ENCODE measurements at regions of chr2 and their contacts with region 1.

Region 1: DNA sequence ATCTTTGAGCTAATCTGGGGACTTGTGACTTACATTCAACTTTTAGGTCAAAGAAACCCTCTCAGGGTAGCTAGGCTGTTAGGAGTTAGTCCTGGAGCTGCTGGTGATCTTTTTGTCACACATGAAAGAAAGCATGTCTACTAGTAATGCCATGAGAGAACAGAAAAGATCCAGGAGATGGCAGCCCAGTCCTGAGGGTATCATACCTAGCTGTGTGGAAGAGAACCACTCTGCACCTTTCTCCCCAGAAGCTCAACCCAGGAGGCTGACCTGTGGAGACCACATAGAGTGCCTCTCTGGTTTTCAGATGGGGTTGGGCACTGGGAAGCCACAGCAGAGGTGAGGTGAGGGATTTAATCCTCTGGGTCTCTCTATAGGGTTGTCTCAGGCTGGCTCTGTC is 460.2 kb upstream of the UBE2E3 start:
- DNase-seq: peak; percentile 18
- ATAC-seq: no peak
- H3K4me3 ChIP-seq: no peak overlapping the region
- H3K27ac ChIP-seq: no peak overlapping the region
- H3K4me1 ChIP-seq: peaks cover 8% of the 10 kb centered on the region
- H3K27me3 ChIP-seq: no peaks in the 10 kb centered on the region
- CTCF ChIP-seq: 0 out of 2 replicates have a peak, but pooled peaks have one; percentile 16
- POLR2A ChIP-seq: no peak
- RAD21 ChIP-seq: peak; percentile 37

Region 2: GRCh38 chr2:179764710-179765109 is 755.5 kb before region 1 on chr2:
- CTCF ChIA-PET with region 1: no interaction called
- POLR2A ChIA-PET with region 1: no interaction called
- dilution Hi-C with region 1: no loop called
- in situ Hi-C with region 1: no loop called
- intact Hi-C with region 1: no loop called
- DNase-seq: no peak
- ATAC-seq: no peak
- H3K4me3 ChIP-seq: no peak overlapping the region
- H3K27ac ChIP-seq: no peak overlapping the region
- H3K4me1 ChIP-seq: no peaks in the 10 kb centered on the region
- H3K27me3 ChIP-seq: no peaks in the 10 kb centered on the region; the same call in 1 of the 2 replicates
- CTCF ChIP-seq: no peak
- POLR2A ChIP-seq: no peak
- RAD21 ChIP-seq: no peak

Region 3: DNA sequence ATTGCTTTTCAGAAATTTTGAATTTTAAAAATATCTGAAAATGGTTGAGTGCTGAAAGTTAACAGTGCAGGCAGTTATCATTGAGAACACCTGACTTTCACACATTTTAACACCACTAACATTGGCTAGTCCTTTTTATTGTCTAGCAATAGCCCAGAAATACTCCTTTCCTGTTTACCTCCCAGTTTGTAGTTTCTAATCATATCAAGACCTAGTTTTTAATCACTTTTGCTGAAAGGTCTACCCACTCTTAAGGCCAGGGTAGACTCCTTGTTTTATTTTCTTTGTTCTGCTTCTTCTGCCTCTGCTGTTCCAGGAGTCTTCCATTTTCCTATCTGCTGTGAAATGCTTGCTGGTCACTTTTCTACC is 532.3 kb after region 1 on chr2:
- CTCF ChIA-PET with region 1: no interaction called
- POLR2A ChIA-PET with region 1: no interaction called
- dilution Hi-C with region 1: no loop called
- in situ Hi-C with region 1: no loop called
- intact Hi-C with region 1: loop called (anchors 5 kb)
- DNase-seq: no peak
- ATAC-seq: no peak
- H3K4me3 ChIP-seq: no peak overlapping the region
- H3K27ac ChIP-seq: no peak overlapping the region
- H3K4me1 ChIP-seq: no peaks in the 10 kb centered on the region; the same call in 1 of the 2 replicates
- H3K27me3 ChIP-seq: no peaks in the 10 kb centered on the region
- CTCF ChIP-seq: no peak
- POLR2A ChIP-seq: no peak
- RAD21 ChIP-seq: no peak

Measured in IMR-90 (cell line).